Motor neuron (in vitro differentiated cells): ENCODE measurements at regions of chr2 and their contacts with region 1.

Region 1: GRCh38 chr2:102442967-102443828 is 20.2 kb downstream of the IL18RAP start:
- ATAC-seq: peak in 3 of 8 experiments; percentile 61 to 88 (median 75)
- H3K4me3 ChIP-seq: no peak overlapping the region
- H3K27ac ChIP-seq: no peak overlapping the region
- H3K4me1 ChIP-seq: no peaks in the 10 kb centered on the region

Region 2: DNA sequence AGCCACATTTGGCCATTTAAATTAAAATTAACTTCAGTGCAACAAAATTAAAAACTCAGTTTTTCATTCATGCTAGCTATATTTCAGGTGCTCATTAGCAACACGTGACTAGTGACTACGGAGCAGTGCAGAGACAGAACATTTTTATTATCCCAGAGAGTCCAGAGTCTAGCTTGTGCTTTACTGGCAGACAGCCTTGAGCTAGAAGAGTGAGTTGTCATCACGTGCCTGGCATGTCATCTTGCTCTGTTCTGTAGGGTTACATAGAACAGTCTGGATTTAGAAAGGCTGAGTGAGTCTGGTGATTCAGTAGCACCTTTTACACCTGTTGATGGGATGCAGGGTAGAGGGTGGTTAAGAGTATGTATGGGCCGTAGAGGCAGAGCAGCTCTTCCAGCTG is 588.3 kb before region 1 on chr2:
- in situ Hi-C with region 1: no loop called
- ATAC-seq: peak in 1 of 8 experiments; percentile 21
- H3K4me3 ChIP-seq: no peak overlapping the region
- H3K27ac ChIP-seq: no peak overlapping the region
- H3K4me1 ChIP-seq: no peaks in the 10 kb centered on the region

Region 3: GRCh38 chr2:102172745-102173144 is 270.5 kb before region 1 on chr2:
- in situ Hi-C with region 1: no loop called
- ATAC-seq: no peak
- H3K4me3 ChIP-seq: no peak overlapping the region
- H3K27ac ChIP-seq: no peak overlapping the region
- H3K4me1 ChIP-seq: no peaks in the 10 kb centered on the region

Region 4: GRCh38 chr2:102251042-102251848 is 192.0 kb before region 1 on chr2:
- in situ Hi-C with region 1: loop called in 2 of 9 experiments (anchors 25 kb)
- ATAC-seq: peak; percentile 31 to 84 (median 48)
- H3K4me3 ChIP-seq: peak overlapping the region in 4 of 5 donors; percentile 6 to 23 (median 16)
- H3K27ac ChIP-seq: no peak overlapping the region
- H3K4me1 ChIP-seq: no peaks in the 10 kb centered on the region

Region 5: DNA sequence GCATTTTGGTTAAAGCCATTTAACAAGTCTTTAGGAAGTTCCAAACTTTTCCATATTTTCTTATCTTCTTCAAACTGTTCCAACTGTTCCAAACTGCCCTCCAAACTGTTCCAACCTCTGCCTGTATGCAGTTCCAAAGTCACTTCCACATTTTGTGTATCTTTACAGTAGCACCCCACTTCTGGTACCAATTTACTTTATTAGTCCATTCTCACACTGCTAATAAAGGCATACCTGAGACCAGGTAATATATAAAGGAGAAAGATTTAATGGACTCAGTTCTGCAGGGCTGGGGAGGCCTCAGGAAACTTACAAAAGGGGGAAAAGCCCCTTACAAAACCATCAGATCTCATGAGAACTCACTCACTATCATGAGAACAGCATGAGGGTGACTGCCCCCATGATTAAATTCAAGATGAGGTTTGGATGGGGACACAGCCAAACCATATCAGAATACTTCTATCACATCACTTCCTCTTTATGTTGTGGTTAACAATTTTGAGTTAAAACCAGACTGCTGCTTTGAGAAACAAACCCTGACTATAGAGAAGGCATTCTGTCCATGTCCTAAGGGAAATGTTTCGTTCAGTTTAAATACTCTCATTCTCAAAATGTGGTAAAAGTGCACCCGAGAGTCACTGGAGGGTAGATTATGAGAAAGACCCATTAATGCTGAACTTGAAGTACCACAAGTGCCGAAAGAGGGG is 76.6 kb before region 1 on chr2:
- in situ Hi-C with region 1: loop called in 1 of 9 experiments (anchors 10 kb)
- ATAC-seq: no peak
- H3K4me3 ChIP-seq: no peak overlapping the region
- H3K27ac ChIP-seq: no peak overlapping the region
- H3K4me1 ChIP-seq: no peaks in the 10 kb centered on the region

Region 6: DNA sequence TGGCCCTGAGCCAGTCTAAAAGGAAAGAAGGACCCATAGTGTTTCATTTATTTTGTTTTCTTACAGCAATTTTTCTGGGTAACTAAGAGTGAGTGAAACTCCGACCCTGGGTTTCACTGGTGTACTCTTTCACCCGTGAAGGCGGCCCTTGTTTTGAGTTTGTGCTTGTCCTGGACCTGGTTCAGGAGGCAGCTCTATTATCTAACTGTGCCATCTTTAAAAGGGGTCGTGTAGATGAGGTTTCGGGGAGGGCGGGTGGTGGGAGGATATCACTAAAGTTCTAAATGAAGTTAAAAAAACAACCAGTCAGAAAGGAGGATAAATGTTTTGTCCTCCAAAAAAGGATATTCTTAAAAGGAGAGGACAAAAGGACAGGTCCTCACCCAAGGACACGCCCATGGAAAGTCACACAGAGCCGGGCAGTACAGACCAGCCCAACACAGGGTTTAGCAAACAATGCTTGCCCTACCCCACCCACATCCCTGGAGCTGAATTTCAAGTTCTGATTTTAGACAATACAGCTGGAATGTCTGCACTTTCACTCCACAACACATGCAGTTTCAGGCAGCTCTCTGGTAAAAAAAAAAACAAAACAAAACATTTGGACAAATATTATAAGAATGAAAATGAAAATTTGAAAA is 97.6 kb after region 1 on chr2:
- in situ Hi-C with region 1: no loop called
- ATAC-seq: peak in 3 of 8 experiments; percentile 38 to 81 (median 56)
- H3K4me3 ChIP-seq: no peak overlapping the region
- H3K27ac ChIP-seq: no peak overlapping the region
- H3K4me1 ChIP-seq: no peaks in the 10 kb centered on the region

Region 7: DNA sequence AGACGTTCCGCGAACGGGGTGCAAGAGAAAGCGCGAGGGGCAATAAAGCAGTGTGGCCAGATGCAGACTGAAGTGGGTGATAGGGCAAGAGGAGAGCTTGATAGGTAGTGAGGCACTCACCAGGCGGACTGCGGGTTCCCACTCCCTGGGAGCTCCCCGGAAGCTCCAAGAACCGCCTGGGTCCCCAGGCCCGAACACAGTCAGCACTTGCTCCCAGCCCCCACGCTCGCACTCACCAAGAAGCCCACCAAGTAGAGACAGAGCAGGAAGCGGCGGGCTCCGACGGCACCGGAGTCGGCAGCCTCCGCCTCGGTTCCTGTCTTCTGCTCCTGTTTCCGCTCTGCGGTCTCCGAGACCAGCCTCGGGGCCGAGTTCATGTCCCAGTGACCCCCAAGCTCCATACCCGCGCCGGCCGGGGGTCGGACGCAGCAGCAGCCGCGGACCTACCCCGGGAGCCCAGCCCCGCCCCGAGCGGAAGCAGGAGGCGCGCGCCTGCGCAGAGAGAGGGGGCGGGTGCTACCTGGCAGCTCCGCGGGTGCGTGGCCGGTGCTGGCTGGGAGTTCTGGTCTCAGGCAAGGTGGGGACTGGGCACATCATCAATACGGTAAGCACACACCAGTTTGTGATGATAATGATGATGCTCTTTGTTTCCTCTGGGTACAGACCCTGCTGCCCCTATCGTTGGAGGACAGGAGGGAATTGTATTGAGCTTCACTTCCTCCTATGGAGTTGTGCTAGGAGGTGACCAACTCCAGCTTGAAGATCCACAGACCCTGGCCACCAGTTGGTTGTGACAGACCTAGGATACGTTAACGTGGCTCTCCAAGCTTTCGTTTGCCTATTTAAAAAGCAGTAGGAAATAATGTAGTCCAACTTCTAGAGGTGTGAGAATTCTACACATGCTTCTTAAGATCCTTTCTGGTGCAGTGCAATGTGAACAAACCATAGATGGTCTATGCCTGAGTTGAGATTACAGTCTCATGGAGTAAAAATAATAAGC is 293.5 kb after region 1 on chr2:
- in situ Hi-C with region 1: no loop called
- ATAC-seq: peak; percentile 93 to 96 (median 95)
- H3K4me3 ChIP-seq: peak overlapping the region; percentile 72 to 98 (median 81)
- H3K27ac ChIP-seq: peak overlapping the region; percentile 12 to 25
- H3K4me1 ChIP-seq: peaks cover 11 to 13% of the 10 kb centered on the region in 2 donors